HepG2 (cell line): ENCODE measurements at regions of chr20 and their contacts with region 1.

Region 1: GRCh38 chr20:51428401-51429143 is 113.9 kb downstream of the NFATC2 start:
- DNase-seq: peak; percentile 75
- ATAC-seq: peak; percentile 81
- H3K4me3 ChIP-seq: peak overlapping the region in 1 of 3 experiments; percentile 41; a peak in 1 of 6 replicates
- H3K27ac ChIP-seq: peak overlapping the region; percentile 28
- H3K4me1 ChIP-seq: peaks cover 60% of the 10 kb centered on the region
- H3K27me3 ChIP-seq: no peaks in the 10 kb centered on the region
- CTCF ChIP-seq: peak; percentile 37
- EP300 ChIP-seq: peak in 1 of 2 experiments; percentile 79; a peak in 3 of 4 replicates
- POLR2A ChIP-seq: no peak
- RAD21 ChIP-seq: 0 out of 2 replicates have a peak, but pooled peaks have one; percentile 17

Region 2: DNA sequence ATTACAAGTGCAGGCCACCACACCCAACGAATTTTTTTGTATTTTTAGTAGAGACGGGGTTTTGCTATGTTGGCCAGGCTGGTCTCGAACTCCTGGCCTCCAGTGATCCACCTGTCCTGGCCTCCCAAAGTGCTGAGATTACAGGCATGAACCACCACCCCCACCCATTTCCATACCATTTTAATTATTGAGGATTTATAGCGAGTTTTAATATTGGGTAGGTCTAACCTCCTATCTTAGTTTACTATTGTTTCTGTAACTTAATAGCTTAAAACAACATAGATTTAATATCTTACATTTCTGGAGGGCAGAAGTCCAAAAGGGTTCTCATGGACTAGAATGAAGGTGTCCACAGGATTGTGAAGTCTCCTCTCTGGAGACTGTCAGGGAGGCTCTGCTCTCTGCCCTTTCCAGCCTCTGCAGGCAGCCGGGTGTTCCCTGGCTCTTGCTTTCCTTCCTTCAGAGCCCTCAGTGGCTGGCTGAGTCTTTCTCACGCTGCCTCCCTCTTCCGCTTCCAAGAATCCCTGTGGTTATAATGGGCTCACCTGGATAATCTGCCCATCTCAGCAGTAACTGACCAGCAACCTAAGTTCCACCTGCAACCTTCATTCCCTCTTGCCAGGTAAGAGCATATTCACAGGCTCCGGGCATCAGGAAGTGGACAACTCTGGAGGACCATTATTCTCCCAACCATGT is 652.3 kb before region 1 on chr20:
- CTCF ChIA-PET with region 1: no interaction called
- POLR2A ChIA-PET with region 1: no interaction called
- in situ Hi-C with region 1: no loop called
- intact Hi-C with region 1: no loop called
- DNase-seq: no peak
- ATAC-seq: peak; percentile 55
- H3K4me3 ChIP-seq: no peak overlapping the region
- H3K27ac ChIP-seq: no peak overlapping the region
- H3K4me1 ChIP-seq: no peaks in the 10 kb centered on the region; the same call in 1 of the 2 replicates
- H3K27me3 ChIP-seq: 0 out of 5 replicates have a peak, but pooled peaks cover 0 to 1% of the 10 kb centered on the region in 2 experiments
- CTCF ChIP-seq: no peak
- EP300 ChIP-seq: no peak
- POLR2A ChIP-seq: no peak
- RAD21 ChIP-seq: no peak

Region 3: DNA sequence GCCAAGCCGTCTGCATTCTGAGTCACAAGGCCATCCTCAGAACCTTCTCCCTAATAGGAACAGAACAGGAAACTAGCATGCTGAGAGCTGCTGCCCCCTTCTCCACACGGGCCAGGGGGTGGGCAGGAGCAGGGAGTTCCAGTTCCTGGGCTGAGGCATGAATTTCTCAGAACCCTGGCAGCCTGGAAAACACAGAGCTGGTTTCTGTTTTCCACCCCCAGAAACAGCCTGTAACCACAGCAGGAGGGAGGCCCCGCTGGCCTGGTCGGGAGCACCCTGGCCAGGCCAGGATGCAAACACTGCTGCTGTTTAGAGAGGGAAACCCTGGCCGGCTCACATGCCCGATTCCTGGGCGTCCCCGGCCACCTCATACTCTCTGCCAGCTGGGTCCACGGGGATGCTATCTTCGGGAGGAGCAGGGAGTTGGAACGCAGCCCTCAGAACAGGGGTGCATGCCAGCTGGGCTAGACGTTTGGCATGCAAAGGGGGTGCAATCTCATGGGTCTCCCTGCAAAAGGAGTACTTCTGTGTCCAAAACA is 16.2 kb before region 1 on chr20:
- CTCF ChIA-PET with region 1: no interaction called
- POLR2A ChIA-PET with region 1: interaction called, 5 read pairs
- in situ Hi-C with region 1: no loop called
- intact Hi-C with region 1: loop called (anchors 2 kb)
- DNase-seq: no peak
- ATAC-seq: peak; percentile 71
- H3K4me3 ChIP-seq: peak overlapping the region in 1 of 3 experiments; percentile 45; a peak in 1 of 6 replicates
- H3K27ac ChIP-seq: peak overlapping the region; percentile 53
- H3K4me1 ChIP-seq: peaks cover 15% of the 10 kb centered on the region
- H3K27me3 ChIP-seq: no peaks in the 10 kb centered on the region
- CTCF ChIP-seq: no peak
- EP300 ChIP-seq: no peak
- POLR2A ChIP-seq: no peak
- RAD21 ChIP-seq: no peak

Region 4: GRCh38 chr20:51500311-51500710 is 71.7 kb after region 1 on chr20:
- CTCF ChIA-PET with region 1: no interaction called
- POLR2A ChIA-PET with region 1: no interaction called
- in situ Hi-C with region 1: no loop called
- intact Hi-C with region 1: loop called (anchors 10 kb)
- DNase-seq: no peak
- ATAC-seq: no peak
- H3K4me3 ChIP-seq: no peak overlapping the region
- H3K27ac ChIP-seq: no peak overlapping the region
- H3K4me1 ChIP-seq: no peaks in the 10 kb centered on the region
- H3K27me3 ChIP-seq: no peaks in the 10 kb centered on the region
- CTCF ChIP-seq: no peak
- EP300 ChIP-seq: no peak
- POLR2A ChIP-seq: no peak
- RAD21 ChIP-seq: no peak

Region 5: DNA sequence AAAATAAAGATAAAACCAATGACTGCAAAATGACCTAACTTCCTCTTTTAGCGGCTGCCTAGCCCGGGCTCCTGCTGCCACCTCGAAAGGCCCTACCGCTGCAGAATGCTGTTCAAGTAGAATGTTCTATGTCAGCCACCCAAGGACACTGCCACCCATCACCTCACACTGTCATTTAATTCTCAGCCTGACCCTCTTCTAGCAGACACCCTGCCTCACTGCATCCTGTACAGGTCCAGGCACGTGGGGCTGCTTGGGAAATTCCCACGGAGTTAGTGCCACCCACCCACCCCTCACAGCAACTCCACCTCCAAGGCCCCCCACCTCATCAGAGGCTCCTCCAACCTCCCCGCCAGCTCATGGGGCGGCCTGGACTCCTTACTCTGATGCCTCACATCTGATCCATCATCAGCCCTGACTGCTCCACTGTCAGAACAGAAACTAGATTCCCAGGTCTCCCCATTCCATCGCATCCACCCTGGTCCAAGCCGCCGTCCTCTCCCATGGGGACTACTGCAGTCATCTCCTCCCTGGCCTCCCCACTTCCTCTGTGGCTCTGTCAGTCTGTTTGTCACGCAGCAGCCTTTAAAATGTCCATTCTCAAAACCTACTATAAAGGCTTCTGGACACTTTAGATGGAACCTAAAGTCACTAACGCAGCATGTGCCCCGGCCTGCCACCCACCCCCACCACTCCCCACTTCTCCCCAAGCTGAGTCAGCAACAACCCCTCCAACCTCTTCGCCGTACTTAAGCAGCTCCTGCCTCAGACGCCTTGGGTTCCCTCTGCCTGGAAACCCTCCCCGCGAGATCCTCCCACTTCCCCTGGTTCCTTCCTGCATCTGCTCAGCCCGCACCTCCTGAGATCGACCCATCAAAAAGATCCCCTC is 96.9 kb after region 1 on chr20:
- CTCF ChIA-PET with region 1: no interaction called
- POLR2A ChIA-PET with region 1: no interaction called
- in situ Hi-C with region 1: no loop called
- intact Hi-C with region 1: no loop called
- DNase-seq: no peak
- ATAC-seq: no peak
- H3K4me3 ChIP-seq: no peak overlapping the region
- H3K27ac ChIP-seq: no peak overlapping the region
- H3K4me1 ChIP-seq: peaks cover 7% of the 10 kb centered on the region
- H3K27me3 ChIP-seq: no peaks in the 10 kb centered on the region
- CTCF ChIP-seq: no peak
- EP300 ChIP-seq: no peak
- POLR2A ChIP-seq: no peak
- RAD21 ChIP-seq: no peak